B cell (primary cell): ENCODE measurements at regions of chr20 and their contacts with region 1.

Region 1: DNA sequence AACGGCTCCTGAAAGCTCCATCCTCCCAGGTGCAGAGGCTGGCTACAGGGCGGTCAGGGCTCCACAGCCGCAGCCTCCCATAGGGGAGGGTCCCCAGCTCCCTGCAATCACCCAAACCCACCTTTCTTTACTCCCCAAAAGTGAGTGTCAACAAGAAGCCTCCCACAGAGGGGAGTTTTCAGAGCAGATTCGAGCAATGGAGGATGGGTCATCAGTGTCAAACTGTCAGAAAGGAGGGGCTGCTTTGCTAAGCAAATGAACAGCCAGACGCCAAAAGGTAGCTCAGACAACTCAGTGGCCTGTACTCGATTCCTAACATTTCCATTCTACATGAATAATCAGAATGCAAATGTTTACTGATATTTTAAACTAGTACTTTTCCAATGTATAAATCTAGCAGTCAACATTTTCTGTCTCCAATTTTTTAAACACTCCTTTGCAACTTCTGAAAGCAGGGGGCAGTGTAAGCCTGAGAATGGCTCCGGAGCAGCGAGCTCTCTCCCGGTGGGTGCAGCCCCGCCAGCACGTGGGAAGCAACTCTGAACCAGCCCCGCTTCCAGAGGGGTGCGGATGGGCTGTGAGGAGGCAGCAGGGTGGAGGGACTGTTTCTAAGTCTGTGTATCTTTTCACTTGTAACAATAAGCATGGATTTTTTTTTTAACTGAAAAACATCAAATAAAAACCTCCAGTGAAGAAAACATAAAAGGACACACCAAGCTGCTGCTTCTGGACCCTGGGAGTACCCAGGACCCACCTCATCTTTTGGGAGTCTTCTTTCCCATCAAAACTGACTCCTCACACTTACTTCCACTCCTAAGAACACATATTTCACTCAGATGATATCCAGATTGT is 54.9 kb downstream of the TAF4 start:
- DNase-seq: peak; percentile 72
- ATAC-seq: peak; percentile 66
- H3K4me3 ChIP-seq: no peak overlapping the region
- H3K4me3 Mint-ChIP-seq: no peak overlapping the region
- H3K27ac ChIP-seq: no peak overlapping the region
- H3K27ac Mint-ChIP-seq: peak overlapping the region; percentile 62
- H3K4me1 ChIP-seq: peaks cover 0 to 3% of the 10 kb centered on the region in 2 donors
- H3K4me1 Mint-ChIP-seq: peaks cover 5% of the 10 kb centered on the region
- H3K27me3 ChIP-seq: no peaks in the 10 kb centered on the region
- H3K27me3 Mint-ChIP-seq: no peaks in the 10 kb centered on the region
- CTCF ChIP-seq: peak; percentile 84

Region 2: DNA sequence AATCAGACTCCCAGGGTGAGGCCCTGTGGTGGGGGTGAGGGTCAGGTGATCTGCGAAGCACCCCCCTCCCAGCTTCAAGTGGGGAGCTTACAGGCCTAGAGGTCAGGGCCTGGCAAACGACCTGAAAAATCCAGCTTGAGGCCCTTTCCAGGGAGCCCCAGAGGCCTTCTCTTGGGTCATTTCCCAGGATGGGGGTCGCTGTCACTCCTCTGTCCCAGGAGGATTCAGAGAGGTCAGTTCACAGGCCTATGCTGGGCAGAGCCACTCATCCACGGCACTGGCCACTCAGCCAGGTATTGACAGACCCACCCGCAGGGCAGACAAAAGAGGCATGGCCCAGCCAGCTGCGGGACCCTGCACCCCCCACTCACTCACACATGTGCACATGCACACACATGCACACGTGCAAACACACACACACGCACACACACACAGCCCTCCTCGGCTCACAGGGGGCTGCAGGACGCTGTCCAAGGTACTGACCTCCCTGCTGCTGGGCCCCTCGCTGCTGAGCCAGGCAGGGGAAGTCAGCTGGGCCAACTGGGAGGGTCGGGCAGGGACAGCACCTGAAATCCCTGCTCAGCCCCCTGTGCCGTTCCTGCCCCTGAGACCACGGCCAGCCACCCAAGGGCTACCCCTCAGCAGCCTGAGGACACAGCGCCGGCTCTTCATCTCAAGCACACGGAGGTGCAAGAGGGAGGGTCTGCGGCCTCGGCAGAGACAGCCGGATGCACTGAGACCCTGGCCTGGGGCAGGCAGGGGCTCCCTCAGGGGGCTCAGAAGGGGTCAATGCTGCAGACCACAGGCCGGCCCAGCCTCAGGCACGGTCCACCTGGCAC is 58.9 kb before region 1 on chr20:
- CTCF ChIA-PET with region 1: no interaction called
- POLR2A ChIA-PET with region 1: no interaction called
- intact Hi-C with region 1: no loop called
- DNase-seq: no peak
- ATAC-seq: no peak
- H3K4me3 ChIP-seq: no peak overlapping the region
- H3K4me3 Mint-ChIP-seq: no peak overlapping the region
- H3K27ac ChIP-seq: no peak overlapping the region
- H3K27ac Mint-ChIP-seq: no peak overlapping the region
- H3K4me1 ChIP-seq: no peaks in the 10 kb centered on the region
- H3K4me1 Mint-ChIP-seq: no peaks in the 10 kb centered on the region
- H3K27me3 ChIP-seq: peaks cover 0 to 15% (median 0%) of the 10 kb centered on the region in 4 experiments
- H3K27me3 Mint-ChIP-seq: peaks cover 17% of the 10 kb centered on the region
- CTCF ChIP-seq: no peak

Region 3: DNA sequence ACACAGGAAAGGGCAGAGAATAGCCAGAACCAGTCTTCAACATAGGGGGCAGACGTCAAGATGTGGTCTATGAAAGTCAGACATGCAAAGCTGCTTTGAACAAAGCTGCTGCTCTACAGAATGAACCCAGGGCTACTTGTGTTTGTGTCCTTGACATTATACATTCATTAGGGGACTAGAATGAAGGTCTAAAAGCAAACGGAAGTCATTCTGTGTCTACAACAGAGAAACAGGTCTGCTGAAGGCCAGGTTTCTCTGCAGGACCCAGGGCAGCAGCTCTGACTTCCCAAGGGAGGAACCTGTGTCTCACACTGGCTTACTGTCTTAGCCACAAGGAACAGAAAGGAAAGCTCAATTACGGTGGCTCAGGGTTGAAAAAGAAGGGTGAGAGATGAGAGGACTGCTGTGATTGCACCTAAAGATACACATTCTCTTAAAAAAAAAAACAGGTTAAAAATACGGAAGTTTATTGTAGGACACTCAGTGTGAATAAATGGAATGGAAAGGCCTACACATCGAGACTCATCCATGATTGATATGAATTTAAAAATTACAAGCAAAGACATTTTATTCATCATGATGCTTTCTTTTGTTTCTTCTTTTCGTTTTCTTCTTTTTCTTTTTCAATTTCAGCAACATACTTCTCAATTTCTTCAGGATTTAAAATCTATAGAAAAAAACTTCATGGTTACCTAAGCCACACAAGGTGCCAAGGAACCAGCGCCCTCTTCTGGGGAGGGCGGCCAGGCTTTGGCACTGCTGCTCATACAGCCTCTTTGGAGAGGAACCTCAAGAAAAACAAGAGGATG is 125.7 kb after region 1 on chr20:
- CTCF ChIA-PET with region 1: interaction called, 56 read pairs
- POLR2A ChIA-PET with region 1: interaction called, 5 read pairs
- intact Hi-C with region 1: no loop called
- DNase-seq: peak; percentile 80
- ATAC-seq: peak; percentile 81
- H3K4me3 ChIP-seq: no peak overlapping the region
- H3K4me3 Mint-ChIP-seq: no peak overlapping the region
- H3K27ac ChIP-seq: peak overlapping the region in 1 of 2 donors; percentile 25
- H3K27ac Mint-ChIP-seq: peak overlapping the region; percentile 63
- H3K4me1 ChIP-seq: peaks cover 9 to 24% of the 10 kb centered on the region in 2 donors
- H3K4me1 Mint-ChIP-seq: peaks cover 32% of the 10 kb centered on the region
- H3K27me3 ChIP-seq: no peaks in the 10 kb centered on the region
- H3K27me3 Mint-ChIP-seq: no peaks in the 10 kb centered on the region
- CTCF ChIP-seq: peak; percentile 86

Region 4: GRCh38 chr20:62143118-62143973 is 132.6 kb after region 1 on chr20 and contains the starts of genes PSMA7 and SS18L1:
- CTCF ChIA-PET with region 1: interaction called, 19 read pairs
- POLR2A ChIA-PET with region 1: no interaction called
- intact Hi-C with region 1: no loop called
- DNase-seq: peak; percentile 94
- ATAC-seq: peak; percentile 90
- H3K4me3 ChIP-seq: peak within 1 kb of the TSS; percentile 54 to 88 (median 63)
- H3K4me3 Mint-ChIP-seq: peak within 1 kb of the TSS; percentile 91
- H3K27ac ChIP-seq: peak within 1 kb of the TSS; percentile 63 to 75
- H3K27ac Mint-ChIP-seq: peak within 1 kb of the TSS; percentile 92
- H3K4me1 ChIP-seq: peaks cover 24 to 29% of the 10 kb centered on the region in 2 donors
- H3K4me1 Mint-ChIP-seq: peaks cover 40% of the 10 kb centered on the region
- H3K27me3 ChIP-seq: no peaks in the 10 kb centered on the region
- H3K27me3 Mint-ChIP-seq: no peaks in the 10 kb centered on the region
- CTCF ChIP-seq: no peak
- total RNA-seq, gene PSMA7: 140 TPM in 2 replicates
- total RNA-seq, gene SS18L1: 20.7 and 22.0 TPM in 2 replicates

Region 5: DNA sequence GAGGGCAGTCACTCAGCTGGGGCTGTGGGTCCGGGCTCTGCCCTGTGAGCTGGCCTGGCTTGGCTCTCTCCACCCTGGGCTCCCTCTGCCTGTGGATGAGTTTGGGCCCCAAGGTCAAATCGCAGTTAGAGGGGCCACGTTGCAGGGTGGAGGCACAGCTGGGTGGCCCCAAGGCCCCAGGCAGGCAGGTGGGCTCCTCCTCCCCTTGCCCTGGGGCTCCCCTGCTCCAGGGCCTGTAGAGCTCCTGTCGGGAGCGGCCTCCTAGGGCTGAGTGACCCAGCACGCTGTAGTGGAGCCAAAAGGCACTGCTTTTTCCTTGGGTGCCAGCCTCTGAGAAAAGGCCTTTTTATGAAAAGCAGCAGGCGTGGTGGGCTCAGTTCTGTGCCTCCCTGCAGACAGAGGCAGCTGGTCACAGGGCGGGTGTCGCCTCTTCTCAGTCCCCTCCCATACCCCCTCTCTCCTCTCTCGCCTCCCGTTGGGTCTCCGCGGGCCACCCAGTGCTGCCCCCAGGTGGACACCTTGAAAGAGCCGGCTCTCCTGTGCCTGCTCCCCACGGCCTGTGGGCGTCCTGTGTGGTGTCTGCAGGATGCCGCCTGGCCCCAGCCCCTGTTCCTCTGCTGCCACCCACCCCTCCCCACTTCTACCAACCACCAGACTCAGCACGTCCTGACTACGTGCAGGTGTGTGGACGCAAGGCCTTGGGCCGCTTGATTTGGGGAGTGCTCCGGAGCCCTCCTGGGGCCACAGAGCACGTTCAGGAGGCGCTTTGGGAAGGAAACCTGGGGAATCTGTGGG is 146.0 kb after region 1 on chr20:
- CTCF ChIA-PET with region 1: interaction called, 13 read pairs
- POLR2A ChIA-PET with region 1: no interaction called
- intact Hi-C with region 1: no loop called
- DNase-seq: peak; percentile 70
- ATAC-seq: peak; percentile 95
- H3K4me3 ChIP-seq: no peak overlapping the region
- H3K4me3 Mint-ChIP-seq: no peak overlapping the region
- H3K27ac ChIP-seq: no peak overlapping the region
- H3K27ac Mint-ChIP-seq: no peak overlapping the region
- H3K4me1 ChIP-seq: peaks cover 0 to 4% of the 10 kb centered on the region in 2 donors
- H3K4me1 Mint-ChIP-seq: peaks cover 11% of the 10 kb centered on the region
- H3K27me3 ChIP-seq: no peaks in the 10 kb centered on the region
- H3K27me3 Mint-ChIP-seq: no peaks in the 10 kb centered on the region
- CTCF ChIP-seq: peak; percentile 66